Uterus (tissue), 4 donors: ENCODE measurements at regions of chr2 and their contacts with region 1.

Region 1: DNA sequence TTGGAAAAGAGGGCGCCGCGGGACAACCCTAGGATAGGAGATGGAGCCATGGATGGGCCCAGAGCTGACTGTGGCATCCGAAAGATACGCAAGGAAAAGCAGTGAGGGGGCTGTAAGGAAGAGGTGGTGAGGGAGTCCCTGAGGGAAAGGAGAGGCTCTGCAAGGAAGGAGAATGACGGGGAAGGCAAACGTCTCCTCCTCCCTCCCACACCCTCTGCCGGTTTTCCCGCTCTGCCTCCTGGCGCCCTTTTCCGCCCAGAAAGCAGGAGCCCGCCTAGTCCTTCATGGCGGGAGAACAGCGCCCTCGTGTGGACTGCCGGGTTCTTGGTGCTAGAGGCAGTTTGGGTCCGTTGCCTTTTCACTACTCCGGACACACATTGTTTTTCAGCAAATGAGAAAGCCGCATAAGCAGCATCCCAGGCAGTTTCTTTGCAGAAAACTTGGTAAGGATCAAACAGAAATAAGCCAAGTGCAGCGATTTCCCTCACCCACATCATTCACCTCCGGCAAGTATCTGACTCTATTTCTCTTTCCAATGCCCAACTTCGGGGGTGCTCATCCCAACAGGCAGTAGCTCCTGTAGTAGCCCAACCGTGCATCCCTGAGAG is 200.4 kb downstream of the INO80D start:
- DNase-seq: peak; percentile 89 to 90
- H3K4me3 ChIP-seq: no peak overlapping the region
- H3K27ac ChIP-seq: no peak overlapping the region
- H3K4me1 ChIP-seq: no peaks in the 10 kb centered on the region
- H3K27me3 ChIP-seq: no peaks in the 10 kb centered on the region
- CTCF ChIP-seq: peak; percentile 88 to 95 (median 92)
- POLR2A ChIP-seq: no peak

Region 2: DNA sequence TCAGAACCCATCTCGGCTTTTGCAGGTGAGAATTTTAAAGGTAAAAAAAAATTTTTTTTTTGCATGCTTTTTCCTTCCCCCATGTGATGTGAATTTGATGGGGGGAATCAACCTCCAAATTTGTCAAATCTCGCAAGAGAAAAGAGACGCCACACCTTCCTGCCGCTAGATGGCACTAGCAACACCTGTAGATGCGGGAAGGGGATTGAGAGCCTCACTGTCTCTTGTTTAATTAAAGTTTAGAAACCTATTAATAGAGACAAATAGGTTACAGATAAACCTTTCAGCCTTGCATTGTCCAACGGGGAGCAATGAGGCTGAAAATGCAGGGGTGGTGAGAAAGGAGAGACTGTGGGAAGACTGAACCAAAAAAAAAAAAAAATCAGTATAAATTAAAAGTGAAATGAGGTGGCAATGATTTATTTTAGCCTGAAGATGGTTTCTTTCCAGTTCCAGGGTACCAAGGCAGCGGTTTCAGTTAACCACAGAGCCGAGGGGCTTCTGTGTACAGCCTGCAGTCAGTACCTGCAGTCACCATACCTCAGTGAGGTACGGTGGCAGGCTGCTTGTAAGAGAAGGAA is 118.7 kb before region 1 on chr2:
- intact Hi-C with region 1: loop called (anchors 10 kb)
- DNase-seq: peak; percentile 71 to 82
- H3K4me3 ChIP-seq: no peak overlapping the region
- H3K27ac ChIP-seq: peak overlapping the region; percentile 66 to 89
- H3K4me1 ChIP-seq: peaks cover 0 to 10% of the 10 kb centered on the region in 2 donors
- H3K27me3 ChIP-seq: no peaks in the 10 kb centered on the region
- CTCF ChIP-seq: peak; percentile 69 to 89 (median 84)
- POLR2A ChIP-seq: no peak

Region 3: GRCh38 chr2:206176121-206176520 is 290.5 kb after region 1 on chr2:
- intact Hi-C with region 1: no loop called
- DNase-seq: no peak
- H3K4me3 ChIP-seq: no peak overlapping the region
- H3K27ac ChIP-seq: no peak overlapping the region
- H3K4me1 ChIP-seq: no peaks in the 10 kb centered on the region
- H3K27me3 ChIP-seq: no peaks in the 10 kb centered on the region
- CTCF ChIP-seq: no peak
- POLR2A ChIP-seq: no peak